ENCODE measurements at regions of chr17 and their contacts with region 1.

Region 1: GRCh38 chr17:75046582-75047289 is at the starts of genes ATP5PD and KCTD2:
- DNase-seq: peak; percentile 97
- H3K4me3 Mint-ChIP-seq: peak within 1 kb of the TSS; percentile 97
- H3K27ac Mint-ChIP-seq: peak within 1 kb of the TSS; percentile 89
- H3K4me1 Mint-ChIP-seq: peaks cover 47% of the 10 kb centered on the region
- H3K27me3 Mint-ChIP-seq: no peaks in the 10 kb centered on the region
- total RNA-seq, gene ATP5PD: 227 to 249 TPM
- total RNA-seq, gene KCTD2: 18.7 to 20.8 TPM

Region 2: DNA sequence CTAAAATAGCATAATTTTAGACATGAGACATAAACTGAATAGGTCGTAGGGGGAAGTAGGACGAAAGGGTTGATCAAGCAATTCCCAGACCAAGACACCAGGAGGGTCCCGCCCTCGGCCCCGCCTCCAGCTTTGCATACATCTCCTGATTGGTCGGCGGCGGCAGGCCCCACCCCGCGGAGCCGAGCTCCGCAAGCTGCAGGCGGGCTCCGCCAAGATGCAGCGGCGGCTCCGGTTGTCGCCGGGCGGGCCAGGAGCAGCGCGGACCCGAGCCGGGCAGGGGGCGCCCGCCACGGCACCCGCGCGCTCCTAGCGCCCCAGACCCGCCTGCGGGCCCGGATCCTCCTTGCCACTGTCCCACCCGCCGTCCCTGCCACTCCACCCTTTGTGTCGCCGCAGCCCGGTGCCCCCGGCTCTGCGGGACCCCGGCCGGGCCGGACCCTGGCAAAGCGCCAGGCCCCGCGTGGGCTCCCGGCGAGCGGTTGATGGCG is 59.3 kb before region 1 on chr17 and contains the start of gene CDR2L:
- CTCF ChIA-PET with region 1: interaction called, 3 read pairs
- intact Hi-C with region 1: loop called (anchors 2 kb)
- DNase-seq: peak; percentile 94
- H3K4me3 Mint-ChIP-seq: peak within 1 kb of the TSS; percentile 80
- H3K27ac Mint-ChIP-seq: no peak within 1 kb of the TSS
- H3K4me1 Mint-ChIP-seq: peaks cover 8% of the 10 kb centered on the region
- H3K27me3 Mint-ChIP-seq: peaks cover 9% of the 10 kb centered on the region
- total RNA-seq, gene CDR2L: 0.49 to 0.93 TPM

Region 3: DNA sequence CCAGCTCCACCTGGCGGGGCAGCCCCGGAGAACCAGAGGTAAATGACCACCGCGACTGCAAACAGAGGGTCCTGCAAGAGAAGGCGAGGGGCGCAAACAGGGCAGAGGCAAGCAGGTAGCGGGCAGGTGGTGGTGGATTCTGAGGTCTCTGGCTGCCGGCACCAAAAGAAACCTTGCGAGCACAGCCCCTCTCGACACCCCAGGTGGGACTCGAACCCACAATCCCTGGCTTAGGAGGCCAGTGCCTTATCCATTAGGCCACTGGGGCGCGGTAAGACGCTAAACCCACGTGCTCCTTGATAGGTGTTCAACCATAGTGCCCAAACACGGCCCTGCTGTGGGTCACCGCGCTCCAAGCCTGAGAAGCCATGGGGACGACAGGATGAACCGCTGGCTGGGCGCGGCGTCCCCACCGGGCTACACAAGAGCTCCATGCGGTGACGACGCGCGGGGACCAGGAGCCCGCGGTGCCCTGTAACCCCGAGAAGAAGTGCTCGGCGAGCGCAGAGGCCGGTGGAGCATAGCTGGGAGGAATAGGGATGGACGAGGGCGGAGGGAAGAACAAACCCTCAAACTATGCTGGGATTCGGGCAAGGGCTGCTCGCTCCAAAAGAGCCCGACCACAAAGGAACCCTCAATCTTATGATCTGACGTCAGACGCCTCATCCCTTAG is 12.4 kb before region 1 on chr17:
- CTCF ChIA-PET with region 1: no interaction called
- intact Hi-C with region 1: loop called (anchors 1 kb)
- DNase-seq: peak; percentile 96
- H3K4me3 Mint-ChIP-seq: peak overlapping the region; percentile 95
- H3K27ac Mint-ChIP-seq: peak overlapping the region; percentile 93
- H3K4me1 Mint-ChIP-seq: peaks cover 46% of the 10 kb centered on the region
- H3K27me3 Mint-ChIP-seq: peaks cover 3% of the 10 kb centered on the region

Region 4: DNA sequence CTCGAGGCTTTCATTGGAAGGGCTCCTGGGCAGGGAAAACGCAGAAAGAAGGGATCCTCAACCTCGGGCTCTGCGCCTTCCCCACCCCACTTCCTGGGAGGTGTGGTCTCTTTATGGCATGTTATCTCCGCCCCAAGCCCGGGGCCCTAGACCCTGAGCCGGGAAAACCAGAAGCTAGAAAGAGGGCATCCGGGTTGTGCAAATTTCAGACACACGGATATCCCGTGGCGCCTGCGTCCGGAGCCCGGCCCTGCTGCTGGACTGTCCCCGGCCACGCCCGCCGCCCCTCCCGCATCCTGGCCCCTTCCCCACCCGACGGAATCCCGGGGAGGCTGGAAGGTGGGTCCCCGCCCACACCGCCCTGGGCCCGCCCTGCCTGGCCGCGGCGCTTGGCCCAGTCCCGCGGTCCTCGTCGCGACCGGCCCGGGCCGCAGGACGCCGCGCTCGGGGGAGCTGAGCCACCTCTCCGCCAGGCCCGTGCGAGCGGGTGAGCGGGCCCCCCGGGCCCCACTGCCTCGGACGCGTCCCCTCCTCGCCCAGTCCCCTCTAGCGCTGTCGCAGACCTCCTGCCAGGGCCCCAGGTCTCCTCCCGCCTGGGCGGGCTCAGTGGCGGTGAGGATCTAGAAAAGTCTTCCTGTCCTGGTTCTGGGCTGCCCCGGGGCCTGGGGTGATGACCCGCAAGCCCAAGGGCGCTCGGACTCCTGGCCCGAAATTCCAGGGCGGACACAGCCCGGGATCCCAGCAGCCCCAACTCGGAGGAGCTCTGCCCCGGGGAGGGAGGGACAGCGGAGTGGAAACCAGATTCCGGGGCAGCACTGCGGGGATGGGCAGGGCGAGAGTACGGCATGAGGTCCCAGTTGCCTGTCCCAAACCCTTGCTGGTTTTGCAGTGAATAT is 41.1 kb after region 1 on chr17 and contains the start of gene SLC16A5:
- CTCF ChIA-PET with region 1: interaction called, 3 read pairs
- intact Hi-C with region 1: loop called (anchors 5 kb)
- DNase-seq: peak; percentile 58
- H3K4me3 Mint-ChIP-seq: peak within 1 kb of the TSS; percentile 70
- H3K27ac Mint-ChIP-seq: peak within 1 kb of the TSS; percentile 56
- H3K4me1 Mint-ChIP-seq: peaks cover 44% of the 10 kb centered on the region
- H3K27me3 Mint-ChIP-seq: no peaks in the 10 kb centered on the region
- total RNA-seq, gene SLC16A5: 2.5 to 3.1 TPM

Region 5: GRCh38 chr17:75199886-75200618 is 153.3 kb after region 1 on chr17:
- CTCF ChIA-PET with region 1: no interaction called
- intact Hi-C with region 1: loop called (anchors 5 kb)
- DNase-seq: no peak
- H3K4me3 Mint-ChIP-seq: no peak overlapping the region
- H3K27ac Mint-ChIP-seq: no peak overlapping the region
- H3K4me1 Mint-ChIP-seq: peaks cover 8% of the 10 kb centered on the region
- H3K27me3 Mint-ChIP-seq: no peaks in the 10 kb centered on the region